Motor neuron (in vitro differentiated cells): ENCODE measurements at regions of chr4 and their contacts with region 1.

Region 1: GRCh38 chr4:10018818-10019461 is 2.4 kb downstream of the SLC2A9 start:
- ATAC-seq: peak in 7 of 8 experiments; percentile 16 to 99 (median 57)
- H3K4me3 ChIP-seq: no peak overlapping the region
- H3K27ac ChIP-seq: no peak overlapping the region
- H3K4me1 ChIP-seq: peaks cover 7 to 8% of the 10 kb centered on the region in 2 donors

Region 2: DNA sequence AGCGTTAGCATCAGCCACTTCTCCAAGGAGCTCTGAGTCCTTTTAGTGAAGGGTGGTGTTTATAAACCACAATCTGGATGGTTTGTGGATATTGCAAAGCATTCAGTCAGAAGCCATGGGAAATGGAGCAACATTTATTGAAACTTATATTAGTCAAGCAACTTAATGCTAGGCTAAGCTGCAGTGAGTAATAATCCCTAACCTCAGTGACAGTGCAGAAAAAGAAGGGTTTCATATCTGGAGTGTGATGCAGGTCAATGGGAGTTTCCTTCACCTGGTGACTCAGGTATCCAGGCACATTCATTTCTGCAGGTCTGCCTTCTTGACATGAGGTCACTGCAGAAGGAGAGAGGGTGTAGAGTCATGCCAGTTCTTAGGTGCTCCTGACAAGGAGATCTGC is 247.9 kb before region 1 on chr4:
- in situ Hi-C with region 1: loop called in 4 of 9 experiments (anchors 5 to 25 kb)
- ATAC-seq: no peak
- H3K4me3 ChIP-seq: no peak overlapping the region
- H3K27ac ChIP-seq: no peak overlapping the region
- H3K4me1 ChIP-seq: no peaks in the 10 kb centered on the region

Region 3: DNA sequence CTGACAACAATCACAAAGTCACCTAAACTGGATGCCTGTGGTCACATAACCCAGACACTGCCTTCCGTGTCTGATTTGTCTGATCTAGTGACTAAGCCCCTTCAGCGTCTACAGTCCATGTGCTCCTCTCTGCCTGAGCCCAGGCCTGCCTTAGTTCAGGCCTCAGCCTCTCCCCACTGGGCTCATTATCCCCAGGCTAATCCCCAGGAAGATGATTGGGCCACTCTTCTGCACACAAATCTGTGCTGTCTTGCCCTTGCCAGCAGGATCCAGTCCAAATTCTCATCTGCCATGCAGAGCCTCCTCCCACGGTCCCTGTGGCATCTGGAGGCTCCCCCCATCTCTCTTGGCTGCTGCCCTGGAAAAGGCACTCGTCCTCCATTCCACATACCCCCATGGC is 94.2 kb before region 1 on chr4:
- in situ Hi-C with region 1: loop called in 1 of 9 experiments (anchors 25 kb)
- ATAC-seq: peak in 6 of 8 experiments; percentile 13 to 56 (median 38)
- H3K4me3 ChIP-seq: no peak overlapping the region
- H3K27ac ChIP-seq: no peak overlapping the region
- H3K4me1 ChIP-seq: peaks cover 9 to 17% of the 10 kb centered on the region in 2 donors

Region 4: GRCh38 chr4:11232015-11232414 is 1213.1 kb after region 1 on chr4:
- in situ Hi-C with region 1: no loop called
- ATAC-seq: peak in 1 of 8 experiments; percentile 56
- H3K4me3 ChIP-seq: no peak overlapping the region
- H3K27ac ChIP-seq: no peak overlapping the region
- H3K4me1 ChIP-seq: peaks cover 15 to 25% of the 10 kb centered on the region in 2 donors